MCF 10A (cell line): ENCODE measurements at regions of chr3 and their contacts with region 1.

Region 1: GRCh38 chr3:124786441-124787241 is 56.4 kb downstream of the UMPS start:
- DNase-seq: peak; percentile 41
- H3K4me3 Mint-ChIP-seq: no peak overlapping the region
- H3K27ac Mint-ChIP-seq: peak overlapping the region; percentile 23
- H3K4me1 Mint-ChIP-seq: peaks cover 10% of the 10 kb centered on the region
- H3K27me3 Mint-ChIP-seq: no peaks in the 10 kb centered on the region
- CTCF ChIP-seq: peak; percentile 38

Region 2: GRCh38 chr3:124768812-124769211 is 17.8 kb before region 1 on chr3:
- CTCF ChIA-PET with region 1: interaction called, 72 read pairs
- POLR2A ChIA-PET with region 1: no interaction called
- intact Hi-C with region 1: no loop called
- DNase-seq: peak; percentile 56
- H3K4me3 Mint-ChIP-seq: no peak overlapping the region
- H3K27ac Mint-ChIP-seq: no peak overlapping the region
- H3K4me1 Mint-ChIP-seq: no peaks in the 10 kb centered on the region
- H3K27me3 Mint-ChIP-seq: no peaks in the 10 kb centered on the region
- CTCF ChIP-seq: peak; percentile 43

Region 3: GRCh38 chr3:124895756-124896155 is 109.1 kb after region 1 on chr3:
- CTCF ChIA-PET with region 1: interaction called, 259 read pairs
- POLR2A ChIA-PET with region 1: interaction called, 19 read pairs
- intact Hi-C with region 1: no loop called
- DNase-seq: no peak
- H3K4me3 Mint-ChIP-seq: no peak overlapping the region
- H3K27ac Mint-ChIP-seq: no peak overlapping the region
- H3K4me1 Mint-ChIP-seq: no peaks in the 10 kb centered on the region
- H3K27me3 Mint-ChIP-seq: no peaks in the 10 kb centered on the region
- CTCF ChIP-seq: no peak

Region 4: DNA sequence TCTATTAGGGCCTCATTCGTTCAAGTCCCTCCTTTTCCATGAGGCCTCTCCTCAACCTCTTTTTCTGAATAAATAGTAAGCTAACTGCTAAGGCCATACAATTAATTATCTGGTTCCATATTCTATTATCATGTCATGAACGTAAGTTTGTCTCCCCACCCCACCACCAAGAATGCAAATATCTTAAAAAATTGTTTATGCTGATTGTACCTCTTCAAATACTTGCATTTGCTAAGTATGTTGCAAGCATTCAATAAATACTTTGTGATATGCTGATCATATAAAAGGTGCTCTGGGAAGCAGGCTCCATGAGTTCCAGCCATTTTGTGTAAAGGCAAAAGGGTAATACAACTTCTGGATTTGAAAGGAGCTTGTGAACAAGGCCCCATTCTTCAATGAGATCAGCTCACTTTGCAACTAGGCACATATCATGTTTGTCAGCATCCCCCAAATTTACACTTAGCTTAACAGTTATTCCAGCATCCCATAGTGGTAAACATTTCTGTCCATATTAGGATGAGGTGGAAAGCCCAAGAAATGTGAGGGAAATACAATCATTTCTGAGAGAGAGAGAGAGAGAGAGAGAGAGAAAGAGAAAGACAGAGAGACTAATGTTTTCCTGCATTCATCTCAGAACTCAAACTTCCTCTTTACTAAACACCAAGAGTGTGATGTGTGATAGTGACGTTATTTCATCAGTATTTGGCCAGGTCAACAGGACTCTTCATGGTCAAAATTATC is 392.7 kb after region 1 on chr3:
- CTCF ChIA-PET with region 1: no interaction called
- POLR2A ChIA-PET with region 1: no interaction called
- intact Hi-C with region 1: no loop called
- DNase-seq: no peak
- H3K4me3 Mint-ChIP-seq: no peak overlapping the region
- H3K27ac Mint-ChIP-seq: no peak overlapping the region
- H3K4me1 Mint-ChIP-seq: no peaks in the 10 kb centered on the region
- H3K27me3 Mint-ChIP-seq: no peaks in the 10 kb centered on the region
- CTCF ChIP-seq: no peak